Aorta (tissue), 5 donors: ENCODE measurements at regions of chr3 and their contacts with region 1.

Region 1: GRCh38 chr3:136075218-136075808 is 109.8 kb downstream of the PPP2R3A start:
- DNase-seq: peak; percentile 71 to 79
- ATAC-seq: peak; percentile 87
- H3K4me3 ChIP-seq: no peak overlapping the region
- H3K27ac ChIP-seq: no peak overlapping the region
- H3K4me1 ChIP-seq: peaks cover 0 to 3% of the 10 kb centered on the region in 2 donors
- H3K27me3 ChIP-seq: no peaks in the 10 kb centered on the region

Region 2: GRCh38 chr3:136250226-136250902 is 175.1 kb after region 1 on chr3 and contains the start of gene PCCB:
- intact Hi-C with region 1: loop called (anchors 2 to 5 kb)
- DNase-seq: peak; percentile 97 to 98
- ATAC-seq: peak; percentile 98
- H3K4me3 ChIP-seq: peak within 1 kb of the TSS; percentile 19 to 79
- H3K27ac ChIP-seq: peak within 1 kb of the TSS in 1 of 2 donors; percentile 49
- H3K4me1 ChIP-seq: no peaks in the 10 kb centered on the region
- H3K27me3 ChIP-seq: no peaks in the 10 kb centered on the region
- total RNA-seq, gene PCCB: 16.4 to 18.7 TPM

Region 3: DNA sequence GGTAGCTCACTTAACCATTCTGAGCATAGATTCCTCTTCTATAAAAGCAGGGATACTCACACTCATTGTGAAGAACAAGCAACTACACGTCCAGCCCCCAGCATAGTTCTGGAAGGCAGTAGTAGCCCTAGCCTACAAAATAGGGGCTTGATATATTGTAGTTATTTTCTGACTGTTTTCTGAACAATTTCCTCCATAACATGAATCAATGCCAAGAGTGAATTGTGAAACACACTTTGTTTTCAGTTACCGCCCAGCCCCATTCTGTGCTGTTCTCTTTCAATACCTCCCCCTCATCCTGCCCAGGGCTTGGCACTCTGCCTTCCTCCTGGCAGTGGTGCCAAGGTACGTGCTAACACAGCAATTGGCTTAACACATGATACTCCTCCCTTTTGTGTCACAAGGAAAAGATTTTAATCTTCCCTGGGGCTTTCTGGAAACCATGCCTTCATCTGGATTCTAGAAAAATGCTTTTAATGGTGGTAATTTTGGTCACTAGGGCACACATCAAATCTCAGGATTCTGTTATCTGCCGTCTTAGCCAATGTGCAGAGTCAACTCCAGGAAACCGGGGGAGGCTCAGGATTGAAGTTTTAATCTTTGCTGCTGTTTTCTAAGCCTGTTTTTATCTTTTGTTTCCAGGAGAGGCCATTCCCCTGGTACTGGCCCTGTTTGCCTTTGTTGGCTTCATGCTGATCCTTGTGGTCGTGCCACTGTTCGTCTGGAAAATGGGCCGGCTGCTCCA is 919.6 kb after region 1 on chr3:
- intact Hi-C with region 1: loop called in 1 of 2 experiments (anchors 5 kb)
- DNase-seq: peak; percentile 92 to 93
- ATAC-seq: peak; percentile 93
- H3K4me3 ChIP-seq: no peak overlapping the region
- H3K27ac ChIP-seq: peak overlapping the region; percentile 90 to 95
- H3K4me1 ChIP-seq: peaks cover 0 to 3% of the 10 kb centered on the region in 2 donors
- H3K27me3 ChIP-seq: no peaks in the 10 kb centered on the region